ENCODE measurements at regions of chr4 and their contacts with region 1.

Region 1: DNA sequence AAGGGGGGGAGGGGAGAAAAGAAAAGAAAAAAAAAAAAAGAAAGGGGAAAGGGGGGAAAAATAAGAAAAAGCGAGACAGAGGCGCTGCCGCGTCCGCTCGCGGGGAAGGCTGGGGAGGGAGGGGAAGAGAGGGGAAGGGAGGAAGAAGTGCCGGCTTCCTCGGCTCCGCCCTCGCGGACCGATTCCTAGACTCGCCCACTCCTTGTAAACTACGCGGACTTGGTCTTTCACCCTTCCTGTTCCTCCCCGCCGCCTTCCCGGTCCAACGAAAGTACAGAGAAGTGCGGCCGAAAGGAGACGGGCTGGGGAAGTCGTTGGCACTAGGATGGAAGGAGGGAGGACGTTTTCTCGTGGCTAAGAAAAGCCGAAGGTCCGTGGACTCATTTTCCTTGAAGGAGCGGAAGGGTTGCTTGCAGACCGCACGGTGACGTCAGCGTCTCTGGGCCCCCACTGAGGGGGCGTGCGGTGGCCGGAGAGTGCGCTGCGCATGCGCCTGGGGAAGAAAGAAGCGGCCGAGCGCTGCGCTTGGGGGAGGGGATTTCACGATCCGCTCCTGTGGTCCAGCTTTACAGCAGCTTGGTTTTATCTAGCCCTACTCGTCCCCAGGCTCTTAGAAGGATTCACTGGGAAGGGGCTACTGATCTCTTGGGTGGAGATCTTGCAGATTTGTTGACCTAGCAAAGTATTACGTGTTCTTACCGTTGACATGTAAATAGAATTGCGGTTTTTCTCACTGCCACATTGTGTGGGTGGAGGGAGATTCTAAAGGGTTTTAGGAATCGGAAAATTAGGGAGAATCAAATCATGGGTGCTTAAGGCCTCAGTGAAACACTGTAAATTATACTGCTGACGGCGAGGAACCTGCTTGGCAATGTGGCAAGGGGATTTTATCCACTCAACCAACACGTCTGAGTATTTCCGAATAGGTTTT is at the start of gene CCNI:
- DNase-seq: peak; percentile 77 to 97
- H3K4me3 ChIP-seq: peak within 1 kb of the TSS; percentile 88 to 97
- H3K27ac ChIP-seq: peak within 1 kb of the TSS; percentile 99 to 100
- H3K4me1 ChIP-seq: peaks cover 4 to 5% of the 10 kb centered on the region in 2 donors
- H3K27me3 ChIP-seq: no peaks in the 10 kb centered on the region
- CTCF ChIP-seq: no peak
- total RNA-seq, gene CCNI: 140 TPM

Region 2: DNA sequence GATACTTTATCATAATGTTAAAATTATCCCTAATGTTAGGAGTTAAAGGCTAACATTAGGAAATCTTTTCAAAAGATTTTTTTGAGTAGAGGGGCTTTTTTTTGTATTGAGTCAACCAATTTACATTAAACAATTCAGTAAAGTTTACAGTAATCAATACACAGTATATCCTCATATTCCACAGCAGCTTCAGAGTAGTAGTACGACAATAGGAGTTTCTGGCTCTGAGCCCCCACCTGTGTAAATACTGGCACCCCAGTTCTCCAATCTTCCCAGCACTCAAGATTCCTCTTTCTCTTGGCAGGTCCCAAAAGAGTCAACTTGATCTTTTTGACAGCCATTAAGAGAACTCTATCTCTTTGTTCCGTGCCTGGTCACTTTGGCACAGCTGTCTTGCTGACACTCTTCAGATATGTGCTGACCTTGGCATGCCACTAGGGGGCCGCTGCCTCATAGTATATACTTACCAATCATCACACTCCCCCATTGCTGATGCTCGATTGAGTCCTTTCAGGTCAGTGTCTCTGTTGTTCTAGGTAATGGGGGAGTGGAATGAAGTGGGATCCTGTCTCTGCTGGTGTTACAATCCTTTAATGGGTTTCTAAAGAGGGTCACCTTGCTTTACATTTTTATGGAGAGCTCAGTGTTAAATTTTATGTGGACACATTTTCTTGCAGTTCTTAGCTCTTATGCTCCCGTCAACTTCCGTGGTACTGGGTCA is 19.1 kb after region 1 on chr4:
- intact Hi-C with region 1: loop called (anchors 2 kb)
- DNase-seq: peak; percentile 34 to 90
- H3K4me3 ChIP-seq: no peak overlapping the region
- H3K27ac ChIP-seq: peak overlapping the region in 1 of 2 donors; percentile 51
- H3K4me1 ChIP-seq: peaks cover 0 to 8% of the 10 kb centered on the region in 2 donors
- H3K27me3 ChIP-seq: no peaks in the 10 kb centered on the region
- CTCF ChIP-seq: peak; percentile 52 to 81 (median 80)

Region 3: GRCh38 chr4:77104791-77105540 is 28.8 kb after region 1 on chr4:
- intact Hi-C with region 1: loop called (anchors 1 kb)
- DNase-seq: peak; percentile 17 to 88
- H3K4me3 ChIP-seq: peak overlapping the region; percentile 35 to 46
- H3K27ac ChIP-seq: peak overlapping the region; percentile 70 to 73
- H3K4me1 ChIP-seq: peaks cover 6 to 20% of the 10 kb centered on the region in 2 donors
- H3K27me3 ChIP-seq: no peaks in the 10 kb centered on the region
- CTCF ChIP-seq: no peak